ENCODE measurements at regions of chrX and their contacts with region 1.

Region 1: GRCh38 chrX:130060122-130061069 is 49.9 kb downstream of the ELF4 start:
- DNase-seq: peak; percentile 69 to 86
- ATAC-seq: peak; percentile 91 to 97 (median 94)
- H3K4me3 ChIP-seq: peak overlapping the region; percentile 28 to 64 (median 57)
- H3K27ac ChIP-seq: peak overlapping the region in 8 of 10 donors; percentile 25 to 69 (median 58)
- H3K4me1 ChIP-seq: peaks cover 0 to 12% (median 3%) of the 10 kb centered on the region in 9 donors
- H3K27me3 ChIP-seq: no peaks in the 10 kb centered on the region
- CTCF ChIP-seq: peak; percentile 67 to 90 (median 85)

Region 2: DNA sequence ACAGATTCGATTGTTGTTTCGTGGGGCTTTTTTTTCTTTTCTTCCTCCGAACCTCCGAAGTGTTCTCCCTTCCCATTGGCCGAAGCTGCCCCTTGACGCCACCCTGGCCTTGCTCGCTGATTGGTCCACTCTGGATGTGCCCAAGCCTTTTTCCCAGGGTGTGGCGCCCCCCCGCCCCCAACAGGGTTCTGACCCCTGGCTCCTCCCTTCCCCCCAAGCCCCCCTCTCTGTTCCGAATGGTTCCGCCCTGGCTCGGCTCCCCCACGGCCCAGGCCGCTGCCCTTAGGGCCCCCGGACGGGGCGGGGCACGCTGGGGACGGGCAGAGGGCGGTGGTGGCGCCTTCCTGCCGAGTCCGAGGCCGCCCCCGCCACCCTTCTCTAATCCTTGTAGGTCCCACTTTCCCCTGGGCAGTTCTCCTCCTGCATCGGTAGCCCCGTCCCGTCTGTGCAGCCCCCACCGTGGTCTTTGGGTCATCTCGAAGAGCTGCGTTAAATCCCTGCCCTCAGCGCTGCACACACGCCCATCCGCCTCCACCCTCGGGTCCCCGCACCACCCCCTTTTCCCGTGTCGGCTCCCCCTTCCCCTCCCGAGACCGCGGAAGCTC is 128.9 kb before region 1 on chrX:
- intact Hi-C with region 1: loop called in 7 of 10 experiments (anchors 2 to 10 kb)
- DNase-seq: peak; percentile 92 to 94
- ATAC-seq: peak; percentile 93 to 97 (median 95)
- H3K4me3 ChIP-seq: peak overlapping the region; percentile 25 to 68 (median 62)
- H3K27ac ChIP-seq: peak overlapping the region; percentile 83 to 95 (median 91)
- H3K4me1 ChIP-seq: no peaks in the 10 kb centered on the region
- H3K27me3 ChIP-seq: peaks cover 0 to 7% (median 0%) of the 10 kb centered on the region in 7 donors
- CTCF ChIP-seq: no peak